ENCODE measurements at regions of chr1 and their contacts with region 1.

Region 1: DNA sequence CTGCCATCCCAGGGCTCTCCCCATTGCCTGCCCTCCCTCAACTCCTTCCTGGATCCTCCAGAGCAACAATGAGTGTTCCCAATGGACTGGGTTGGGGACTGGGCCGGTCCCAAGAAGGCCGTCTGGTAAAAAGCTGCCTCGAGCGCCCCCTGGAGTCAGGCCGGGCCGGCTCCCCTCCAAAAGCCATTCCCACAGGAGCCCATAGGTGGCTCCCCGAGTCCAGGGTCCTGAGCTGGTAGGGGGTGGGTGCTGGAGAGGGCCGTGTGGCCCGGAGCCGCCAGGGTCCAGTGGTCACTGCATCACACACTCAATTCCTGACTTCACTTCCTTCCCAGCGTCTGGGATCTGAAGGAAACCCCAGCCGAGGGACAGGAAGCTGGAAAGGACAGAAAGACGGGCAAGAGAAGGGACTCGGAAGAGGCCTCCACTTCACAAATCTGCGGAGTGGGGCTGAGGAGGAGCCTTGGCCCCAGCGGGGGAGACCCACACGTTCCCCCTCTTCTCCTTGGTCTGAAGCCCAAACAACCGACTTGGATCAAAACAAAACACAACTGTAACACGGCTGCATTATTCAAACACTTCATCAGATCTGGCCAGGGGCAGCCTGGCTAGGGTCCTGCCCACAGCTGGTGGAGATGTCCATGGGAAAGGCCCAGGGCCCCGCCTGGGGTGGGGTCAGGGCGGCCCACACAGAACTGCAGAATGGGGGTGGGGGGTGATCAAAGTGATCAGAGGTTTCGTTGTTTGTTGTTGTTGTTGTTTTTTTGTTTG is 10.9 kb upstream of the ALDH4A1 start:
- DNase-seq: peak; percentile 66 to 68 (median 67)
- H3K4me3 ChIP-seq: no peak overlapping the region
- H3K27ac ChIP-seq: no peak overlapping the region
- H3K4me1 ChIP-seq: peaks cover 0 to 30% (median 23%) of the 10 kb centered on the region in 4 experiments
- H3K27me3 ChIP-seq: no peaks in the 10 kb centered on the region

Region 2: DNA sequence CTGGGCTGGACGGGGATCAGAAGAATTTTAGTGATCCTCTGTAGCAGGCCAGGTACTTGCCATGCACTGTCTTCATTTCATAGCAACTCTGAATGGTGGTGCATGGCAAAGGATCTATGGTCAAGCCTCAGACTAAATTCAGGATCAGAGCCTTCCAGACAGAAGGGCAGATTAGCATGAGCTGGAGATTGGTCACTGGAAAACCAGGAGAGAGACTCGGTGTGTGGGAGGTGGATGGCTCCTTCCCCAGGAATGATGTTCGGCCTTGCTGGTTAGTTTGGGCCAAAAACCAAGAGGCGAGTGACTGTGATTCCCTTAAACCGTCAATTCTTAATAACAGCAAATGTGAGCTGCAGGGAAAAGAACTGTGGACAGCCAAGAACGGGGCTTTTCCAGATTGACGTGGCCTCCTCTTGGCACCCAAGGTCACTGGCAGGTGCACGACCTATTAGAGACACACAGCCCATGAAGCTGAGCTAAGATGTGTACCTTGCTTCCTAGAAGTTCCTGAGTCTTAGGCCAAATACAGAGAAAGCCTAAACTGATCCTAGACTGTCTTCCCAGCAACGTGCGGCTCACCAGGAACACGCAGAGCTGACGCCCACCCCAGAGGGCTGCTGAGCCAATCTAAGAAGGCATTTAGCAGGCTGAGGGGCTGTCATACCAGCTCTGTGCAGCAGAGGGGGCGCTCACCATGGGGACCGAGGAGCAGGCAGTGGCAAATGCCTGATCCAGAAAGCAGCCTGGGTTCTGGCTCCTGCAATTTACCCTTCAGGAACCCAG is 29.4 kb before region 1 on chr1:
- CTCF ChIA-PET with region 1: interaction called, 45 read pairs
- POLR2A ChIA-PET with region 1: interaction called, 4 read pairs
- DNase-seq: peak; percentile 63 to 78 (median 65)
- H3K4me3 ChIP-seq: no peak overlapping the region
- H3K27ac ChIP-seq: no peak overlapping the region
- H3K4me1 ChIP-seq: no peaks in the 10 kb centered on the region
- H3K27me3 ChIP-seq: no peaks in the 10 kb centered on the region

Region 3: GRCh38 chr1:18956369-18957135 is 43.3 kb after region 1 on chr1 and contains the start of gene IFFO2:
- CTCF ChIA-PET with region 1: interaction called, 40 read pairs
- POLR2A ChIA-PET with region 1: interaction called, 9 read pairs
- DNase-seq: peak; percentile 89 to 95 (median 94)
- H3K4me3 ChIP-seq: peak within 1 kb of the TSS; percentile 65 to 90 (median 76)
- H3K27ac ChIP-seq: no peak within 1 kb of the TSS
- H3K4me1 ChIP-seq: peaks cover 11 to 55% (median 55%) of the 10 kb centered on the region in 4 experiments
- H3K27me3 ChIP-seq: peaks cover 0 to 4% (median 2%) of the 10 kb centered on the region in 5 experiments

Region 4: GRCh38 chr1:18972531-18972930 is 59.3 kb after region 1 on chr1:
- CTCF ChIA-PET with region 1: interaction called, 222 read pairs
- POLR2A ChIA-PET with region 1: no interaction called
- DNase-seq: peak; percentile 63 to 71 (median 70)
- H3K4me3 ChIP-seq: no peak overlapping the region
- H3K27ac ChIP-seq: no peak overlapping the region
- H3K4me1 ChIP-seq: peaks cover 4 to 11% (median 8%) of the 10 kb centered on the region in 4 experiments
- H3K27me3 ChIP-seq: no peaks in the 10 kb centered on the region